Heart left ventricle (tissue), 16 donors: ENCODE measurements at regions of chr2 and their contacts with region 1.

Region 1: DNA sequence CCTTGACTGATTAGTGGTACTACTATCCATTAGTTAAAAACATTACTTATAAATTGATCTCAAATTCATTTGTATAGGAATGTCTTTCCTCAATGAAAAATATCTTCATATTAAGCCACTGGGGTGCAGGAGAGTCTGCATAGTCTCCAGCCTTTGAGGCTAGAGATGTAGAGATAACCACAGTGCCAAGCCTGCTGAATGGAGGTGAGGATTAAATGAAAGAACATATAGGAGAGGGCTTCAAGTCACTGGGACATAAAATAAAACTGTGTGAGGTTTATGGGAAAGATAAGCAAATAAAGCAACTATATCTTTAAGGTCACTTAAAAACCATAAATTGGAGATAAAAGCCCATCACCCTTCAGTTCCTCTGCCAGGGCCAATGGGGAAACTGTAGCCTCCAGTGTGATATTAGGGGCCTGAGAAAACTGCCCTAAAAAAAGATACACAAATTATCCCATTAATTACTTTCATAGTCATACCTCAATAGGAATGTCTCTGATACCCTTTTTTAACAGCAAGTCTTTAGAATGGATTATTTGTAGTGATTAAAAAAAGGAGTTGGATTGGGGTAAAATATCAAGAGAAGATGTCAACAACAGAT is 27.6 kb downstream of the GALNT3 start:
- DNase-seq: no peak
- ATAC-seq: no peak
- H3K4me3 ChIP-seq: no peak overlapping the region
- H3K27ac ChIP-seq: no peak overlapping the region
- H3K4me1 ChIP-seq: no peaks in the 10 kb centered on the region
- H3K27me3 ChIP-seq: no peaks in the 10 kb centered on the region
- CTCF ChIP-seq: no peak
- POLR2A ChIP-seq: no peak

Region 2: GRCh38 chr2:165202230-165202629 is 564.2 kb before region 1 on chr2:
- intact Hi-C with region 1: no loop called
- DNase-seq: no peak
- ATAC-seq: no peak
- H3K4me3 ChIP-seq: no peak overlapping the region
- H3K27ac ChIP-seq: no peak overlapping the region
- H3K4me1 ChIP-seq: no peaks in the 10 kb centered on the region
- H3K27me3 ChIP-seq: peaks cover 0 to 3% (median 0%) of the 10 kb centered on the region in 9 donors
- CTCF ChIP-seq: no peak
- POLR2A ChIP-seq: no peak

Region 3: GRCh38 chr2:165778653-165779451 is 12.4 kb after region 1 on chr2:
- intact Hi-C with region 1: no loop called
- DNase-seq: no peak
- ATAC-seq: no peak
- H3K4me3 ChIP-seq: no peak overlapping the region
- H3K27ac ChIP-seq: no peak overlapping the region
- H3K4me1 ChIP-seq: no peaks in the 10 kb centered on the region
- H3K27me3 ChIP-seq: peaks cover 0 to 3% (median 0%) of the 10 kb centered on the region in 9 donors
- CTCF ChIP-seq: peak in 1 of 12 donors; percentile 6
- POLR2A ChIP-seq: no peak

Region 4: GRCh38 chr2:166112193-166112605 is 345.8 kb after region 1 on chr2:
- intact Hi-C with region 1: loop called in 1 of 10 experiments (anchors 5 kb)
- DNase-seq: no peak
- ATAC-seq: no peak
- H3K4me3 ChIP-seq: no peak overlapping the region
- H3K27ac ChIP-seq: no peak overlapping the region
- H3K4me1 ChIP-seq: no peaks in the 10 kb centered on the region
- H3K27me3 ChIP-seq: no peaks in the 10 kb centered on the region
- CTCF ChIP-seq: no peak
- POLR2A ChIP-seq: no peak